ENCODE measurements at regions of chr1 and their contacts with region 1.

Region 1: GRCh38 chr1:243255791-243256512 is at the start of gene SDCCAG8:
- DNase-seq: peak; percentile 100
- H3K4me3 ChIP-seq: peak within 1 kb of the TSS; percentile 52 to 99 (median 94)
- H3K27ac ChIP-seq: peak within 1 kb of the TSS; percentile 92 to 97 (median 96)
- H3K4me1 ChIP-seq: peaks cover 0 to 45% (median 39%) of the 10 kb centered on the region in 4 donors
- H3K27me3 ChIP-seq: no peaks in the 10 kb centered on the region
- CTCF ChIP-seq: no peak
- EP300 ChIP-seq: no peak
- POLR2A ChIP-seq: peak; percentile 65 to 76
- total RNA-seq, gene SDCCAG8: 30.3 to 49.7 (median 40.2) TPM

Region 2: DNA sequence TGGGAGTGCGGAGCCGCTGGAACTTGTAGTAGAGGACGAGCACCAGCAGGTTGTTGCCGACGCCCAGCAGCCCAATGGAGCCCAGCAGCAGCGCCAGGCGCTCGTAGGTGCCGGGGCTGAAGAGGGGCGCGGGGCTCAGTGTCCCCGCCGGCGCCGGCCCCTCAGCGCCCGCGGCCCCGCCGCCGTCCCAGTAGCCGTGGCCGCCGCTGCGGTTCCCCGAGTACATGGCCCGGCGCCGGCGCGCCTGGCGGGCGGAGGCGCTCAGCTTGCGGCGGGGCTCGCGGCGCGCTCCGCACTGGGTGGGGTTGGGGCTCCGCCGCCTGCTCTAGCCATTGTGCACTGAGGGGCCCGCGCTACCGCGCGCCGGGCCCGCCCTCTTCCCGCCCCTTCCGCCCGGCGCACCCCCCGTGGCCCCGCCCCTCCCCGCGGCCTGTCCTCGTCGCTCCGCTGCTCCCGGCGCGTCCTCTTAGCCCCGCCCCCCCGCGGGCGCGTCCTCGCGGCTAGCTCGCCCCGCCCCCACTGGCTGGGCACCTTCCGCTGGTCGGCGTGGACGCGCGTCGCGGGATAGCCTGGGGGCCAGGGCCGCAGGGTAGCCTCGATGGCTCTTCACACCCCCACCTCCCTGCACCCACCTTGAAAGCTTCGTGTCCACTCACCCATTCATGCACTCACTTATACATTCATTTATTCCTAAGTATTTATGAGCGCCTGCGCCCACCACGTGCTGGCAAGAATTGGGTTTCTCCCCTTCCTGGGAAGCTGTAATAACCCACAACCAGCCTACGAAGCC is 1615.7 kb before region 1 on chr1 and contains the starts of genes CHML and OPN3:
- intact Hi-C with region 1: loop called (anchors 10 kb)
- DNase-seq: peak; percentile 95
- H3K4me3 ChIP-seq: peak within 1 kb of the TSS; percentile 76 to 93 (median 89)
- H3K27ac ChIP-seq: peak within 1 kb of the TSS; percentile 81 to 90 (median 84)
- H3K4me1 ChIP-seq: peaks cover 0 to 37% (median 20%) of the 10 kb centered on the region in 4 donors
- H3K27me3 ChIP-seq: no peaks in the 10 kb centered on the region
- CTCF ChIP-seq: no peak
- EP300 ChIP-seq: no peak
- POLR2A ChIP-seq: no peak
- total RNA-seq, gene CHML: 6.1 to 8.0 (median 6.6) TPM
- total RNA-seq, gene OPN3: 2.5 to 12.8 (median 5.2) TPM

Region 3: DNA sequence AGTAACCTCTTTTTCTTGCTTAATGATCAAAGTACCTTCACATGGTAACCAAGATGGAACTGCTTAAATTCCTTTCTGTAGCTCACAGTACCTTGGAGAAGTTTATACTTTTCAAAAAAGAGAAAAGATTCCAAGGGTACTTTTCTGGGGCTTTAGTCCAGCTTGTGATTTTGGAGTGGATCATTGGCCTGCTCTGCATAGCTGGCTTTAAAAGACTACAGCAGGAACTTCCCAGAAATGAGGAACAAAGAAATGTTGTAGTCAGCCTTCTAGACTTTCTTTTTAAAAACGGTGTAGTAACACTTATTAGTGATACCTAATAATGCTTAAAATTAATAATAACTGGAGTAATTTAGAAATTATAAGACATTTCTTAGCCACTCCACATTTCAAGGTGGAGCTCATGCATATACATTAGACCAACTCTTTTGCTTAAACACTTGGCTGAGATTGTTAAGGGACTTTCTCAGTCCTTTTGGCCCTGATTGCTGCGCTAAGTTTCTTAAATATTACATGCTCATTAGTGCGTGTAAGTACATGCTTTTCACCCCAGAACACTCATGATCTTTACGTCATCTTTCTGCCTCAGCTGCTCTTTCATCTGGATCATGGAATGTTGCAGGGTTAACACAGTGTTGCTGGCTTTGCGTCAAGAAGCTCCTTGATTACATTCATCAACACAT is 57.1 kb after region 1 on chr1:
- intact Hi-C with region 1: no loop called
- DNase-seq: no peak
- H3K4me3 ChIP-seq: no peak overlapping the region
- H3K27ac ChIP-seq: no peak overlapping the region
- H3K4me1 ChIP-seq: no peaks in the 10 kb centered on the region
- H3K27me3 ChIP-seq: no peaks in the 10 kb centered on the region
- CTCF ChIP-seq: no peak
- EP300 ChIP-seq: no peak
- POLR2A ChIP-seq: no peak

Region 4: GRCh38 chr1:243850452-243851256 is 594.7 kb after region 1 on chr1:
- intact Hi-C with region 1: loop called (anchors 10 kb)
- DNase-seq: peak; percentile 93
- H3K4me3 ChIP-seq: peak overlapping the region; percentile 95 to 99 (median 97)
- H3K27ac ChIP-seq: peak overlapping the region; percentile 96 to 99 (median 98)
- H3K4me1 ChIP-seq: peaks cover 0 to 27% (median 16%) of the 10 kb centered on the region in 4 donors
- H3K27me3 ChIP-seq: no peaks in the 10 kb centered on the region
- CTCF ChIP-seq: no peak
- EP300 ChIP-seq: no peak
- POLR2A ChIP-seq: no peak

Region 5: GRCh38 chr1:244451951-244452795 is 1196.2 kb after region 1 on chr1:
- intact Hi-C with region 1: loop called (anchors 10 kb)
- DNase-seq: peak; percentile 99
- H3K4me3 ChIP-seq: peak overlapping the region; percentile 76 to 94 (median 88)
- H3K27ac ChIP-seq: peak overlapping the region; percentile 93 to 99 (median 97)
- H3K4me1 ChIP-seq: peaks cover 0 to 40% (median 33%) of the 10 kb centered on the region in 4 donors
- H3K27me3 ChIP-seq: no peaks in the 10 kb centered on the region
- CTCF ChIP-seq: peak in 1 of 4 experiments; percentile 39
- EP300 ChIP-seq: no peak
- POLR2A ChIP-seq: no peak

Region 6: DNA sequence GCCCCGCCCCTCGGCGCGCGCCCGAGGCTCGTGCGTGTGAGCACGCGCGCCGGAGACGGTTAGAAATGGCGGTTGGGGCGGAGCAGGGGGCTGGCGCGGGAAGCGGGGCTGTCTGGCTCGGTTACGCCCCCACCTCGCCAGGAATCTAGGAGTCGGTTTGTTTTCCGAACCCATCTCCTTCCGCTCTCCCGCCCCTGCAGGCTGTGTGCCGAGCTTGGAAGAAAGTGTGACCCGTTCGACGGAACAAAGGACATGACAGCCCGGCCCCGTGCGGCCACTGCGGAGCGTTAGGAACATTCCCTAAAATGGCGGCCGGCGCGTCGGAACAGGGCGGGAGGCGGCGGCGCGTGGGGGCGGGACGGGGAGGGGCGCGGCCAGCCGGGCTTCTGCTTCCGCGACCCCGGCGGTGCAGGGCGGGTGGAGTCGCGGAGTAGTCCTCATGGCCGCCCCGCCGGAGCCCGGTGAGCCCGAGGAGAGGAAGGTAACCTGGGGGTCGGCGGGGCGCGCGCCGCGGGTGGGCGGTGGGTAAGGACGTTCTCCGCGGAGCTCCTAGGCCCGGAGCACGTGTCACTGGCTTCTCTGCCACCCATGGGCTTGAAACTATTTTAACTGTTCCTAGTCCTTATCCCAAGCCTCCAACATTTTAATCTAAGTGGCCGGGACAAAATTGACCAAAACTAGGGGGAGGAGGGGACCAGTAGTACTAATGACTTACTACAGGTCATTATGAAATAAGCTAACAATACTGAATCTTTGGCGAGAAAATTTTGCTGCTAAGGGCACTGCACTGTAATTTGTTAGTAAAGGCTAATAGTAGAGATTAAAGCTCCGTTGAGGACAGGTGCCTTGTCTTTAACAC is 1579.6 kb after region 1 on chr1 and contains the start of gene COX20:
- intact Hi-C with region 1: loop called (anchors 10 kb)
- DNase-seq: peak; percentile 96
- H3K4me3 ChIP-seq: peak within 1 kb of the TSS; percentile 70 to 81 (median 76)
- H3K27ac ChIP-seq: peak within 1 kb of the TSS; percentile 98 to 100 (median 99)
- H3K4me1 ChIP-seq: peaks cover 0 to 56% (median 47%) of the 10 kb centered on the region in 4 donors
- H3K27me3 ChIP-seq: no peaks in the 10 kb centered on the region
- CTCF ChIP-seq: no peak
- EP300 ChIP-seq: peak in 1 of 4 donors; percentile 50
- POLR2A ChIP-seq: peak; percentile 42 to 45
- total RNA-seq, gene COX20: 59.7 to 132 (median 79.9) TPM

Measured in sigmoid colon (tissue), 7 donors.